Heart left ventricle (tissue), 16 donors: ENCODE measurements at regions of chr19 and their contacts with region 1.

Region 1: GRCh38 chr19:44570984-44571684 is 41.7 kb upstream of the CEACAM20 start:
- DNase-seq: peak in 4 of 5 donors; percentile 40 to 65 (median 52)
- ATAC-seq: peak in 3 of 4 donors; percentile 82 to 85 (median 84)
- H3K4me3 ChIP-seq: no peak overlapping the region
- H3K27ac ChIP-seq: no peak overlapping the region
- H3K4me1 ChIP-seq: no peaks in the 10 kb centered on the region
- H3K27me3 ChIP-seq: peaks cover 0 to 17% (median 0%) of the 10 kb centered on the region in 9 donors
- CTCF ChIP-seq: peak; percentile 66 to 91 (median 80)
- POLR2A ChIP-seq: no peak

Region 2: GRCh38 chr19:44512326-44513298 is 58.5 kb before region 1 on chr19:
- intact Hi-C with region 1: no loop called
- DNase-seq: no peak
- ATAC-seq: peak in 2 of 4 donors; percentile 31 to 55
- H3K4me3 ChIP-seq: no peak overlapping the region
- H3K27ac ChIP-seq: no peak overlapping the region
- H3K4me1 ChIP-seq: no peaks in the 10 kb centered on the region
- H3K27me3 ChIP-seq: peaks cover 0 to 34% (median 0%) of the 10 kb centered on the region in 9 donors
- CTCF ChIP-seq: peak in 6 of 12 donors; percentile 8 to 44 (median 28)
- POLR2A ChIP-seq: no peak

Region 3: GRCh38 chr19:44653977-44654774 is 83.0 kb after region 1 on chr19:
- intact Hi-C with region 1: loop called (anchors 1 to 5 kb)
- DNase-seq: peak; percentile 73 to 88 (median 76)
- ATAC-seq: peak; percentile 57 to 85 (median 75)
- H3K4me3 ChIP-seq: no peak overlapping the region
- H3K27ac ChIP-seq: no peak overlapping the region
- H3K4me1 ChIP-seq: peaks cover 0 to 25% (median 5%) of the 10 kb centered on the region in 12 donors
- H3K27me3 ChIP-seq: no peaks in the 10 kb centered on the region
- CTCF ChIP-seq: peak; percentile 50 to 75 (median 68)
- POLR2A ChIP-seq: no peak

Region 4: GRCh38 chr19:44764975-44765948 is 194.1 kb after region 1 on chr19:
- intact Hi-C with region 1: loop called in 4 of 10 experiments (anchors 5 to 10 kb)
- DNase-seq: peak in 2 of 5 donors; percentile 37 to 64
- ATAC-seq: peak in 1 of 4 donors; percentile 38
- H3K4me3 ChIP-seq: no peak overlapping the region
- H3K27ac ChIP-seq: peak overlapping the region in 1 of 12 donors; percentile 62
- H3K4me1 ChIP-seq: peaks cover 0 to 56% (median 0%) of the 10 kb centered on the region in 12 donors
- H3K27me3 ChIP-seq: no peaks in the 10 kb centered on the region
- CTCF ChIP-seq: no peak
- POLR2A ChIP-seq: no peak

Region 5: DNA sequence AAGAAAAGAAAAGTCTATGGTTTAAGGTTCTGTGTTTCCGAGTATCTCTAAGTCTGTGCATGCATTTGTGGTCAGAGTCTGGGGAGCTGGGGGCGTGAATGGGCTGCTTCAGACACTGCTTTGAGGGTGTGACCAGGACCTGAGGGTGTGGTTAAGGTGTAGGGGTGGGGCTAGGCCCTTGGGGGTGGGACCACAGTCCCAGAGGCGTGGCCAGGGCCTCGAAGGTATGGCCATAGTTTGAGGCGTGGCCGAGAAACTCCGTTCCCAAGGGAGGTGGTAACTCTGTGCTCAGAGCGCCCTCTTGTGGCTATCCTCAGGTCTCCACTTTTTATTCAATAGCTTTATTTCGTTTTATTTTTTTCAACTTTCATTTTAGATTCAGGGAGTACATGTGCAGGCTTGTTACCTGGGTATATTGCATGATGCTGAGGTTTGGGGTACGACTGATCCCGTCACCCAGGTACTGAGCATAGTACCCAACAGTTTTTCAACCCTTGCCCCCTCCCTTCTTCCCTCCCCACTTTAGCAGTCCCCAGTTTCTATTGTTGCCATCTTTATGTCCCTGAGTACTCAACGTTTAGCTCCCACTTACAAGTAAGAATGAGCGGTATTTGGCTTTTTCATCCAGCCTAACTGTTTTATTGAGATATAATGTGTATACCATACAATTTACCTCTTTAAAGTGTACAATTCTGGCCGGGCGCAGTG is 199.6 kb after region 1 on chr19:
- intact Hi-C with region 1: loop called in 4 of 10 experiments (anchors 5 to 10 kb)
- DNase-seq: peak; percentile 89 to 95 (median 94)
- ATAC-seq: peak; percentile 96 to 99 (median 99)
- H3K4me3 ChIP-seq: peak overlapping the region in 1 of 12 donors; percentile 9
- H3K27ac ChIP-seq: peak overlapping the region in 1 of 12 donors; percentile 50
- H3K4me1 ChIP-seq: peaks cover 0 to 37% (median 1%) of the 10 kb centered on the region in 12 donors
- H3K27me3 ChIP-seq: no peaks in the 10 kb centered on the region
- CTCF ChIP-seq: peak in 11 of 12 donors; percentile 81 to 91 (median 87)
- POLR2A ChIP-seq: no peak